ENCODE measurements at regions of chr6 and their contacts with region 1.

Region 1: GRCh38 chr6:36514554-36515456 is 32.5 kb downstream of the STK38 start:
- DNase-seq: no peak
- ATAC-seq: no peak
- H3K4me3 ChIP-seq: no peak overlapping the region
- H3K4me3 Mint-ChIP-seq: no peak overlapping the region
- H3K27ac ChIP-seq: no peak overlapping the region
- H3K27ac Mint-ChIP-seq: peak overlapping the region in 7 of 9 donors; percentile 2 to 73 (median 41)
- H3K4me1 ChIP-seq: peaks cover 8 to 21% of the 10 kb centered on the region in 2 donors
- H3K4me1 Mint-ChIP-seq: peaks cover 19 to 55% (median 44%) of the 10 kb centered on the region in 7 donors
- H3K27me3 ChIP-seq: no peaks in the 10 kb centered on the region
- H3K27me3 Mint-ChIP-seq: no peaks in the 10 kb centered on the region

Region 2: DNA sequence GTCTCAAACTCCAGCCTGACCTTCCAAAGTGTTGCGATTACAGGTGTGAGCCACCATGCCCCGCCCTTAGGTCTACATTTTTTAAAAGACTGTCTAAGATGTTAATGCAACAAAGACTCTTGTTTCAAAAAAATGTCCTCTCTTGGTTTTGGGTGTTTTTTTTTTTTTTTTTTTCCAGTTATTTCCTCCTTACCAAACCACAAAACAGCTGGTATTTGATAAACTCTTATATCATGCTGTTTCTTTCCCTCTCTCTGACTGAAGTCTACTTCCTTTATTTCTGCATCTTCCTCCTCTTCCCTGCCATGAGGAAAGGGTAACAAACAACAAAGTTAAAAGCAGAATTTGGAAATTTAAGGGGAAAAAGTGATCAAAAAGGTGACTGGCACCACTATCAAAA is 11.3 kb after region 1 on chr6:
- CTCF ChIA-PET with region 1: interaction called, 3 read pairs
- POLR2A ChIA-PET with region 1: interaction called, 5 read pairs
- intact Hi-C with region 1: loop called in 1 of 2 experiments (anchors 1 kb)
- DNase-seq: no peak
- ATAC-seq: no peak
- H3K4me3 ChIP-seq: no peak overlapping the region
- H3K4me3 Mint-ChIP-seq: peak overlapping the region in 8 of 10 donors; percentile 3 to 66 (median 52)
- H3K27ac ChIP-seq: no peak overlapping the region
- H3K27ac Mint-ChIP-seq: peak overlapping the region in 7 of 9 donors; percentile 18 to 61 (median 45)
- H3K4me1 ChIP-seq: peaks cover 3 to 23% of the 10 kb centered on the region in 2 donors
- H3K4me1 Mint-ChIP-seq: peaks cover 29 to 76% (median 56%) of the 10 kb centered on the region in 7 donors
- H3K27me3 ChIP-seq: no peaks in the 10 kb centered on the region
- H3K27me3 Mint-ChIP-seq: no peaks in the 10 kb centered on the region

Region 3: DNA sequence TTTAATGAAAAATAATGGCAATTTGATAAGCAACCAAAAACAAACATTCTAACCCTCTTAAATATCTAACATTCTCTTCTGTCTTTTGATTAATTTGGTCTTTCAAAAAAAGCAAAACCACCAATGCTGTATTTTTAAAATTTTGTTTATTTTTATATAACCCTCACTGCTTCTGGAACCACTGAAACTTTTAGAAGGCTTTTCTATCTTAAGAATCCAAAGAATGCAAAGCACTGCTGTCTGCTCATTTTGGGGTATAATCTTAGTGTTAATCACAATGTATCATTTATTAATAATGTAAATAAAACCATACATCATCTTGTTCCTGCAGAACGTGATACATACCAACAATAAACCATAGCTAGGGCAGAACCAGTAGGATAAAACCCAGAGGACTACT is 18.5 kb after region 1 on chr6:
- CTCF ChIA-PET with region 1: interaction called, 3 read pairs
- POLR2A ChIA-PET with region 1: interaction called, 3 read pairs
- intact Hi-C with region 1: loop called in 1 of 2 experiments (anchors 1 kb)
- DNase-seq: no peak
- ATAC-seq: no peak
- H3K4me3 ChIP-seq: no peak overlapping the region
- H3K4me3 Mint-ChIP-seq: peak overlapping the region in 7 of 10 donors; percentile 8 to 62 (median 39)
- H3K27ac ChIP-seq: no peak overlapping the region
- H3K27ac Mint-ChIP-seq: peak overlapping the region in 6 of 9 donors; percentile 32 to 99 (median 72)
- H3K4me1 ChIP-seq: peaks cover 23 to 39% of the 10 kb centered on the region in 2 donors
- H3K4me1 Mint-ChIP-seq: peaks cover 37 to 89% (median 75%) of the 10 kb centered on the region in 7 donors
- H3K27me3 ChIP-seq: no peaks in the 10 kb centered on the region
- H3K27me3 Mint-ChIP-seq: no peaks in the 10 kb centered on the region

Region 4: GRCh38 chr6:36566418-36566905 is 51.7 kb after region 1 on chr6:
- CTCF ChIA-PET with region 1: no interaction called
- POLR2A ChIA-PET with region 1: no interaction called
- intact Hi-C with region 1: no loop called
- DNase-seq: no peak
- ATAC-seq: no peak
- H3K4me3 ChIP-seq: no peak overlapping the region
- H3K4me3 Mint-ChIP-seq: no peak overlapping the region
- H3K27ac ChIP-seq: no peak overlapping the region
- H3K27ac Mint-ChIP-seq: no peak overlapping the region
- H3K4me1 ChIP-seq: no peaks in the 10 kb centered on the region
- H3K4me1 Mint-ChIP-seq: no peaks in the 10 kb centered on the region
- H3K27me3 ChIP-seq: no peaks in the 10 kb centered on the region
- H3K27me3 Mint-ChIP-seq: peaks cover 0 to 19% (median 0%) of the 10 kb centered on the region in 5 donors

Measured in naive thymus-derived CD4-positive, alpha-beta T cell (primary cell).